GM12878 (cell line): ENCODE measurements at regions of chr6 and their contacts with region 1.

Region 1: GRCh38 chr6:26270903-26271667 is 93.9 kb upstream of the BTN3A2 start:
- DNase-seq: peak; percentile 98
- ATAC-seq: peak; percentile 57
- H3K4me3 ChIP-seq: peak overlapping the region; percentile 72
- H3K27ac ChIP-seq: peak overlapping the region; percentile 96
- H3K4me1 ChIP-seq: peaks cover 3% of the 10 kb centered on the region
- H3K27me3 ChIP-seq: no peaks in the 10 kb centered on the region
- CTCF ChIP-seq: no peak
- EP300 ChIP-seq: no peak
- POLR2A ChIP-seq: peak; percentile 95
- RAD21 ChIP-seq: no peak

Region 2: DNA sequence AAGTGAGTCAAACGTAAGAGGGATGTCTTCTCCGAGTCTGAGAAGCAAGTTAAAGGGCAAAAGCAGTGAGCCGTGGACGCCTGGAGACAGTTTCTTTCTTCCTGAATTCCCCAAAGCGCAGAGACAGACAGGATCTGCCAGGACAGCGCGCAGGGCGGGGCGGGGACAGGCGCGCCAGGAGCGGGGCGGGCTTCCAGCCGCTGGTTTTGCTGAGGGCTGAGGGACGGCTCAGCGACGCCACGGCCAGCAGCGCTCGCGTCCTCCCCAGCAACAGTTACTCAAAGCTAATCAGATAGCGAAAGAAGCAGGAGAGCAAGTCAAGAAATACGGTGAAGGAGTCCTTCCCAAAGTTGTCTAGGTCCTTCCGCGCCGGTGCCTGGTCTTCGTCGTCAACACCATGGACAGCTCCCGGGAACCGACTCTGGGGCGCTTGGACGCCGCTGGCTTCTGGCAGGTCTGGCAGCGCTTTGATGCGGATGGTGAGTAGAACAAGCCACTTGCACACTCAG is 619.0 kb before region 1 on chr6 and contains the start of gene SCGN:
- CTCF ChIA-PET with region 1: no interaction called
- POLR2A ChIA-PET with region 1: no interaction called
- RAD21 ChIA-PET with region 1: no interaction called
- SMC1A ChIA-PET with region 1: no interaction called
- in situ Hi-C with region 1: no loop called
- intact Hi-C with region 1: no loop called
- DNase-seq: no peak
- ATAC-seq: no peak
- H3K4me3 ChIP-seq: no peak within 1 kb of the TSS
- H3K27ac ChIP-seq: no peak within 1 kb of the TSS
- H3K4me1 ChIP-seq: no peaks in the 10 kb centered on the region
- H3K27me3 ChIP-seq: no peaks in the 10 kb centered on the region; a peak in 1 of 4 replicates
- CTCF ChIP-seq: no peak
- EP300 ChIP-seq: no peak
- POLR2A ChIP-seq: no peak
- RAD21 ChIP-seq: no peak
- polyA plus RNA-seq, gene SCGN: not detected

Region 3: DNA sequence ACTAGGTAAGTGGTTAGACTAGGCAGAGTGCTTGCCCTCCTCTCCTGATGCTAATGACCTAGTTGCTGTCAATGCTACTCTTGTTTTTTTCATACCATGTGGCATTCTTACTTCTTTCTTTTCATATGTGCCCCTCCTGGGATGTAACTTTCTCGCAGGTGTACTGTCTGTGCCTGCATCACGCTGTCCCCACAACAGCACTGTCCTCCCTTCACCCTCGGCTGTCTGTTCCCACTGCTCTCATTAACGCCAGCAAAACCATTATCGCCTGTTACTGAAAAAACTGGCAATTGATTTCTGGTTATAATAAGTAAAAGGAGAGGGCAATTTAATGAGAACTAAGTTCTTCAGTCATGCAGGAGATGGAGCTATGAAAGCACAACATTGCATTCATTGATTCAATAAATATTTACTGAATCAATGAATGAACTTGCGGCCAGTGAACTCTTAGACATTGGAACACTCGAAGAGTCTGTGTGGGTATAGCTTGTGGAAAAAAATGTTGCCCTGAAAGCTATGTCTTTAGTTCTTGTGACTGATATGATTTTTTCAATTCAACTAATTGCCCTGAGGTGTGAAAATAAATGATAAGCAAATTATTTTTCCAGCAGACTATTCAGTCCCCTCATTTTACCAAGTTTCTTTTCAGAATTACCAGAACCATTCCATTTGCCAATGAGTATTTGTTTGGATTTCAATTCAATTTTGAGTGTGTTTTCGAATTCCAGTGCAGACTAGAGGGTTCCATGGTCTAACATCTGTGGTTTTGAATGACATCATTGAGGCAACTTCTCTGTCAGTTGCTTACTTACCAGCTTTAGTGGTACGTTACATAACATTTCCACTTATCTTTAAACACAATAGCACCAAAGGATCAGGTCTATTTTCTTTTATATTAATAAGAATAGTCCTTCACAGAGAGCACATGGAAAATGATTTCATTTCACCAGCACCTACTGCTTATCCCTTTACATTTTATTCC is 514.4 kb before region 1 on chr6:
- CTCF ChIA-PET with region 1: no interaction called
- POLR2A ChIA-PET with region 1: no interaction called
- RAD21 ChIA-PET with region 1: no interaction called
- SMC1A ChIA-PET with region 1: no interaction called
- in situ Hi-C with region 1: no loop called
- intact Hi-C with region 1: no loop called
- DNase-seq: no peak
- ATAC-seq: no peak
- H3K4me3 ChIP-seq: no peak overlapping the region
- H3K27ac ChIP-seq: no peak overlapping the region
- H3K4me1 ChIP-seq: no peaks in the 10 kb centered on the region
- H3K27me3 ChIP-seq: peaks cover 0 to 2% of the 10 kb centered on the region in 2 experiments; a peak in 2 of 4 replicates
- CTCF ChIP-seq: no peak
- EP300 ChIP-seq: no peak
- POLR2A ChIP-seq: no peak
- RAD21 ChIP-seq: no peak

Region 4: DNA sequence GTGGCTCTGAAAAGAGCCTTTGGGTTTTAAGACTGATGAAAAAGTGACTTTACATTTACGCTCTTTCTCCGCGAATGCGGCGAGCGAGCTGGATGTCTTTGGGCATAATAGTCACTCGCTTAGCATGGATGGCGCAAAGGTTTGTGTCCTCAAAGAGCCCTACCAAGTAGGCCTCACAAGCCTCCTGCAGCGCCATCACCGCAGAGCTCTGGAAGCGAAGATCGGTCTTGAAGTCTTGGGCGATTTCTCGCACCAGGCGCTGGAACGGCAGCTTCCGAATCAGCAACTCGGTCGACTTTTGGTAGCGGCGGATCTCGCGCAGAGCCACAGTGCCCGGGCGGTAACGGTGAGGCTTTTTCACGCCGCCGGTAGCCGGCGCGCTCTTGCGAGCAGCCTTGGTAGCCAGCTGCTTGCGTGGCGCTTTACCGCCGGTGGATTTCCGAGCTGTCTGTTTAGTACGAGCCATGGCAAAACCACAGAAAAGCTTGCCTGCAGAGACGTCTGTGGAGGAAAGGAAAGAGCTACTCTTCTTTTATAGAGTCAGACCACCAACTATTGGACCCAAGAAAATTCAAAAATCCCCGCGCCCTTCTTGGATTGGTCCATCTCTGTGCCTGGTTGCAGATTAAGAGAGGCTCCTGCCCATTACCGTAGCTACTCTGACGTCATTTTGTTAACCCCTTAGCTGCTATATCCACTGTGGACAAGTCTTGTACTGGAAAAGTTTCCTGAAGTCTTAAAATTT is 239.3 kb before region 1 on chr6:
- CTCF ChIA-PET with region 1: no interaction called
- POLR2A ChIA-PET with region 1: interaction called, 3 read pairs
- RAD21 ChIA-PET with region 1: no interaction called
- SMC1A ChIA-PET with region 1: no interaction called
- in situ Hi-C with region 1: no loop called
- intact Hi-C with region 1: loop called (anchors 5 kb)
- DNase-seq: peak; percentile 97
- ATAC-seq: peak; percentile 70
- H3K4me3 ChIP-seq: peak overlapping the region; percentile 75
- H3K27ac ChIP-seq: peak overlapping the region; percentile 95
- H3K4me1 ChIP-seq: peaks cover 9% of the 10 kb centered on the region; the same call in 1 of the 2 replicates
- H3K27me3 ChIP-seq: no peaks in the 10 kb centered on the region
- CTCF ChIP-seq: 0 out of 6 replicates have a peak, but pooled peaks of 1 of the 3 experiments have one; percentile 11
- EP300 ChIP-seq: peak in 1 of 2 experiments; percentile 10; a peak in 1 of 4 replicates
- POLR2A ChIP-seq: peak; percentile 96
- RAD21 ChIP-seq: no peak

Region 5: DNA sequence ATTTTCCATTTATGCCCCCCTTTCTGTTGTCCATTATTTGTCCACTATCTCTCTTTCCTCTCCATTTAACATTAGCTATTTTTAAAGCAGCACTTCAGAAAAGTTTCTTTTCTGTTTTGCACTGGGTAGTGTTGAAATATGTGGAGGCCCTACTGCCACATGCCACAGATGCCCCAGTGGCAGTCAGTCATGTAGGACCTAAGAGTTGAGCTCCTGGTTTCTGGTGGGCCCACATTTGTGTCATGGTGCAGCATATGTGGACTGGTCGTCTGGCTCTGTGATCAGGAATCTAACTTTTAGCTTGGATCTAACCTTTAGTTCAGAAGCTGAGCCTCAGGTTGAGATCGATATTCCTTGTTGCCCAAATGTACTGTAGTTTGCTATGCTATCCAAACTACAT is 129.1 kb before region 1 on chr6:
- CTCF ChIA-PET with region 1: no interaction called
- POLR2A ChIA-PET with region 1: no interaction called
- RAD21 ChIA-PET with region 1: no interaction called
- SMC1A ChIA-PET with region 1: no interaction called
- in situ Hi-C with region 1: no loop called
- intact Hi-C with region 1: no loop called
- DNase-seq: no peak
- ATAC-seq: no peak
- H3K4me3 ChIP-seq: no peak overlapping the region
- H3K27ac ChIP-seq: no peak overlapping the region
- H3K4me1 ChIP-seq: no peaks in the 10 kb centered on the region
- H3K27me3 ChIP-seq: no peaks in the 10 kb centered on the region
- CTCF ChIP-seq: no peak
- EP300 ChIP-seq: no peak
- POLR2A ChIP-seq: no peak
- RAD21 ChIP-seq: no peak

Region 6: DNA sequence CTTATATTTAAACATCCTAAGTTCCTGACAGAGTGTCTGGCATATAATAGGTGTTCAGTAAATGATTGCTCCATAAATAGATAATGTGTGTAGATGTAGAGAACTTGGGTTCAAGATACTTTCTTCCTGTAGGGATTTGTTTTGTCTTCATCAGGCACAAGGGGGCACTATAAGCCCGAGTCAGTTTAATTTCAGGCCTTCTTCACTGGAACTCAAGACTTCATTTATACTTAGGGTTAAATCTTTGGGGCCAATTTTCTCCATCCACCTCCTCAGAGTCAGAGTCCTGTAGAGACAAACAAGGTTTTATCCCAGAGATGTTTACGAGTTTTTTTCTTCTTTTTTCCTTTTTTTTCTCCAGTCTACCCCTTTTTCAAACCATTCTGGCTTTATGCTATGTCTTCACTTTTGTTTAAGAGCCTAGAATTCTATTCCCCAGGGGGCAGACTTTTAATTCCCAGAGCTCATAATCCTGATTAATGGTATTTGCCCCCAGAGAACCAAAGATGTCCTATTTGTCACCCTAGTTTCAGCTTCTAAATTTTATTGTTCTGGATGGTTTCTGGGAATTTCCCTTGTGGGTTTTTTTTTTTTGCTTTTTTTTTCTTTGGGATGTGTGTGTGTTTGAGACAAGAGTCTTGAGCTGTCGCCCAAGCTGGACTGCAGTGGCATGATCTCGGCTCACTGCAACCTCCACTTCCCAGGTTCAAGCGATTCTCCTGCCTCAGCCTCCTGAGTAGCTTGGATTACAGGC is 95.5 kb before region 1 on chr6:
- CTCF ChIA-PET with region 1: interaction called, 10 read pairs
- POLR2A ChIA-PET with region 1: interaction called, 6 read pairs
- RAD21 ChIA-PET with region 1: interaction called, 4 read pairs
- SMC1A ChIA-PET with region 1: interaction called, 3 read pairs
- in situ Hi-C with region 1: no loop called
- intact Hi-C with region 1: loop called (anchors 5 kb)
- DNase-seq: no peak
- ATAC-seq: peak; percentile 28
- H3K4me3 ChIP-seq: peak overlapping the region; percentile 9; the same call in 1 of the 2 replicates
- H3K27ac ChIP-seq: peak overlapping the region; percentile 27
- H3K4me1 ChIP-seq: peaks cover 27% of the 10 kb centered on the region
- H3K27me3 ChIP-seq: no peaks in the 10 kb centered on the region
- CTCF ChIP-seq: peak; percentile 56 to 77 (median 64); a peak in 5 of 6 replicates
- EP300 ChIP-seq: no peak
- POLR2A ChIP-seq: no peak
- RAD21 ChIP-seq: peak; percentile 91

Region 7: DNA sequence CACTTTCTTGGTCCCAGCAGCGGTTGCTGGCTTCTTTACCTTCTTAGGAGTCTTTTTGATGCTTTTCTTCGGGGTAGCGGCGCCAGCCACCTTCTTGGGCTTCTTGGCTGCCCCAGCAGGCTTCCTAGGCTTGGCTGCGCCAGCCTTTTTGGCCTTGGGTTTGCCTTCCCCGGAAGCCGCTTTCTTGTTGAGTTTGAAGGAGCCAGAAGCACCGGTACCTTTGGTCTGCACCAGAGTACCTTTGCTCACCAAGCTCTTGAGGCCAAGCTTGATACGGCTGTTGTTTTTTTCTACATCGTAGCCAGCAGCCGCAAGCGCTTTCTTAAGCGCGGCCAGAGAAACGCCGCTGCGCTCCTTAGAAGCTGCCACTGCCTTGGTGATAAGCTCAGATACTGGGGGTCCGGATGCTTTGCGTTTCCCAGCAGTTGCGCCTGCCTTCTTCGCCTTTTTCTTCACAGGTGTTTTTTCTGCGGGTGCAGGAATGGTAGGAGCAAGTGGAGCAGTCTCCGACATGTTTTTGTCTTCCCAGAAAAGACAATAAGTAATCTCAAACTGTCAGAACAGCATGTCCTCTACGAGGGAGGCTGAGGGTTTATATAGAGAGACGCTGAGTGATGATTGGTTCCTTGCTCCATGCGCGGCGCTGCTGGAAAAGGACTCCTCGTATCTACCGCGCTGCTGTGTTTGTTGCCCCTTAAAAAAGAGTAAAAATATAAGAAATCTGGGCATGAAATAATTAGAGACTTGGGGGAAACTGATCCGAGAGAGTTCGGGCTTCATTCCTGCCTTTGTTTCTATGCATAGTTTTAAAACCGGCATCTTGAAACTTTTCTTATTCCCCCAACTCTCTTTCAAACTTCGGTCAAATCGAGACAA is 36.4 kb before region 1 on chr6:
- CTCF ChIA-PET with region 1: interaction called, 8 read pairs
- POLR2A ChIA-PET with region 1: interaction called, 10 read pairs
- RAD21 ChIA-PET with region 1: interaction called, 13 read pairs
- SMC1A ChIA-PET with region 1: interaction called, 44 read pairs
- in situ Hi-C with region 1: no loop called
- intact Hi-C with region 1: no loop called
- DNase-seq: peak; percentile 96
- ATAC-seq: peak; percentile 62
- H3K4me3 ChIP-seq: peak overlapping the region; percentile 83
- H3K27ac ChIP-seq: peak overlapping the region; percentile 95
- H3K4me1 ChIP-seq: peaks cover 2% of the 10 kb centered on the region
- H3K27me3 ChIP-seq: no peaks in the 10 kb centered on the region
- CTCF ChIP-seq: no peak; a peak in 1 of 6 replicates
- EP300 ChIP-seq: peak in 1 of 2 experiments; percentile 64; a peak in 2 of 4 replicates
- POLR2A ChIP-seq: peak; percentile 92
- RAD21 ChIP-seq: 0 out of 2 replicates have a peak, but pooled peaks have one; percentile 13

Region 8: DNA sequence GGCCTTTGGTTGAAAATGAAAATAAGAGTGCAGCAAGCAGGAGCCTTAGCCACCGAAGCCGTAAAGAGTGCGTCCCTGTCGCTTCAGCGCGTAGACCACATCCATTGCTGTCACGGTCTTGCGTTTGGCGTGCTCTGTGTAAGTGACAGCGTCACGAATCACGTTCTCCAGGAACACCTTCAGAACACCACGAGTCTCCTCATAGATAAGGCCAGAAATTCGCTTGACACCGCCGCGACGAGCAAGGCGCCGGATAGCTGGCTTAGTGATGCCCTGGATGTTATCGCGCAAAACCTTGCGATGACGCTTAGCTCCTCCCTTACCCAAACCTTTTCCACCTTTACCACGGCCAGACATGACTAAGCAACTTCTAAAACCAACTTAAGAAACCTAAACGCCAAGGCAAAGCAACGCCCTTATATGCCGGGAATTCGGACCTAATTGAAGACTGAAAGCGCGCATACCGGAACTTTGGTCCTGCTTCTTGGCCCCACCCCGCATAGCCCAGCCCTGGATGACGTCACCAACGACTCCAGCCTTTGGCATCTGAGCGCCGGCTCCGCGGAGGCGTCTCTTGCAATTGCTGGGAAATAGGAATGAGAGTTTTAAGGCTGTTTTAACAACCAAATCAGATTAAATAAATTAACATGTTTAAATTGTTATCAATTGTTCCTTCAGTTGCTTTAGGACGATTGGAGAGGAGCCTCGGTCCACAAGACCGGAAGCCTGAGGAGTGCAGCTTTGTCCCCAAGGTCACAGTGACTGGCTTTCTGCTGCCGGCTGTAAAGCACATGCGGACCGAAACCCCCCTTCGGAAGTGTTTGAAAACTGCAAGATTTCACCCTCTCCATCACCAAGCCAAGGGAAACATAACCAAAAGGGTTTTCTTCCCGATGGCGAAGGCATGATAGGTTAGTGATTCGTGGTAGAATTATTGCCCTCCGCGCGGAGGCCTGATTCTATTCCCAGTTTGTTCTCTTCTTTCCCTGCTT is 14.4 kb after region 1 on chr6:
- CTCF ChIA-PET with region 1: interaction called, 14 read pairs
- POLR2A ChIA-PET with region 1: interaction called, 74 read pairs
- RAD21 ChIA-PET with region 1: interaction called, 43 read pairs
- SMC1A ChIA-PET with region 1: interaction called, 49 read pairs
- in situ Hi-C with region 1: no loop called
- intact Hi-C with region 1: loop called (anchors 1 kb)
- DNase-seq: peak; percentile 100
- ATAC-seq: peak; percentile 84
- H3K4me3 ChIP-seq: peak overlapping the region; percentile 75
- H3K27ac ChIP-seq: peak overlapping the region; percentile 97
- H3K4me1 ChIP-seq: no peaks in the 10 kb centered on the region; the same call in 1 of the 2 replicates
- H3K27me3 ChIP-seq: no peaks in the 10 kb centered on the region
- CTCF ChIP-seq: no peak
- EP300 ChIP-seq: peak in 1 of 2 experiments; percentile 72; a peak in 3 of 4 replicates
- POLR2A ChIP-seq: peak; percentile 95
- RAD21 ChIP-seq: no peak

Region 9: DNA sequence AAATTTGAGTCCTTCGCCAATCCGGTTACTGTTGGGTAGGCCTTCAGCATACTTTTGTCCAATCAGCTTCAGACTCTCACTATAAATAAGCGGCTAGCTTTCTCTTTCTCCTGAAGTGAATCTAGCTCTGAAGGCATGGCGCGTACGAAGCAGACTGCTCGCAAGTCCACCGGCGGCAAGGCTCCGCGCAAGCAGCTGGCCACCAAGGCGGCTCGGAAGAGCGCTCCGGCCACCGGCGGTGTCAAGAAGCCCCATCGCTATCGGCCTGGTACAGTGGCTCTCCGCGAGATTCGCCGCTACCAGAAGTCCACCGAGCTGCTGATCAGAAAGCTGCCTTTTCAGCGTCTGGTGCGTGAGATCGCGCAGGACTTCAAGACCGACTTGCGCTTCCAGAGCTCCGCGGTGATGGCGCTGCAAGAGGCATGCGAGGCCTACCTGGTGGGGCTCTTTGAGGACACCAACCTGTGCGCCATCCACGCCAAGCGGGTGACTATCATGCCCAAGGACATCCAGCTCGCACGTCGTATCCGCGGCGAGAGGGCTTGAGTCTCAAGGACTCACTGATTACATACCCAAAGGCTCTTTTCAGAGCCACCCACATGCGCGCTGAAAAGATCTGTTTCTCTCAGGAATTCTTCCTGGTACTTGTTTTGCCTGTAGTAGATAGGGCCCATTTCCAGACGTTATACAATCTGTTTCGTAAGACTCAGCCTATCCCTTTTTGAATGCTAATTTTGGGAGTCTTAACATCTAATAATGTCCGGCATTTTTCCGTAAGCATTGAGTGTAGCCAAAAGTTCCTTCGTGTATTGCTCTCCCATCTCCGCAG is 1539.1 kb after region 1 on chr6:
- CTCF ChIA-PET with region 1: interaction called, 3 read pairs
- POLR2A ChIA-PET with region 1: interaction called, 4 read pairs
- RAD21 ChIA-PET with region 1: no interaction called
- SMC1A ChIA-PET with region 1: no interaction called
- in situ Hi-C with region 1: no loop called
- intact Hi-C with region 1: loop called (anchors 10 kb)
- DNase-seq: peak; percentile 98
- ATAC-seq: peak; percentile 43
- H3K4me3 ChIP-seq: peak overlapping the region; percentile 74
- H3K27ac ChIP-seq: peak overlapping the region; percentile 82
- H3K4me1 ChIP-seq: peaks cover 25% of the 10 kb centered on the region
- H3K27me3 ChIP-seq: no peaks in the 10 kb centered on the region
- CTCF ChIP-seq: peak in 1 of 3 experiments; percentile 19; a peak in 2 of 6 replicates
- EP300 ChIP-seq: no peak
- POLR2A ChIP-seq: peak; percentile 95
- RAD21 ChIP-seq: no peak